GM10248 (cell line): ENCODE measurements at regions of chr20 and their contacts with region 1.

Region 1: GRCh38 chr20:1764136-1765033 is 106.8 kb upstream of the SIRPG start:
- DNase-seq: peak; percentile 63
- CTCF ChIP-seq: peak; percentile 86

Region 2: GRCh38 chr20:1802385-1803060 is 38.1 kb after region 1 on chr20:
- CTCF ChIA-PET with region 1: interaction called, 11 read pairs
- POLR2A ChIA-PET with region 1: no interaction called
- DNase-seq: peak; percentile 70
- CTCF ChIP-seq: peak; percentile 82